Activated B cell treated with CpG ODN at 0.5 μM for 24 hours (primary cell): ENCODE measurements at regions of chr11 and their contacts with region 1.

Region 1: GRCh38 chr11:73072901-73073481 is 69.1 kb downstream of the FCHSD2 start:
- DNase-seq: no peak
- ATAC-seq: peak; percentile 70
- H3K4me3 Mint-ChIP-seq: peak overlapping the region; percentile 60
- H3K27ac Mint-ChIP-seq: peak overlapping the region; percentile 84
- H3K4me1 Mint-ChIP-seq: peaks cover 75% of the 10 kb centered on the region
- H3K27me3 Mint-ChIP-seq: no peaks in the 10 kb centered on the region
- CTCF ChIP-seq: no peak

Region 2: DNA sequence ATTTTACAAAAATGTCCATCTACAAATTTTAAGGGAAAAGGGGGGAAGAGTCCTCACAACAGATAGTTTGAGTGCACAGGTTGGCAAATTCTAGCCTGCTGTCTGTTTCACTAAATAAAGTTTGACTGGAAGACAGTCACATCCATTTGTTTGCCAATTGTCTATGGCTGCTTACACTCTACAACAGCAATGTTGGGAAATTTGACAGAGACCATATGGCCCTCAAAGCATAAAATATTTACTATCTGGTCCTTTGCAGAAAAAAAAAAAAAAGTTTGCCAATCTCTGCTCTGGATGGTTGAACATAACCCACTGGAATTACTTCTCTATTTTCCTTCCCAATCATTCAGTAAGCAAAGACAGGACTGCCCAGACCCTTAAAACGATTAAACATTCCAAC is 19.0 kb before region 1 on chr11:
- CTCF ChIA-PET with region 1: no interaction called
- POLR2A ChIA-PET with region 1: no interaction called
- intact Hi-C with region 1: loop called (anchors 2 kb)
- DNase-seq: no peak
- ATAC-seq: no peak
- H3K4me3 Mint-ChIP-seq: no peak overlapping the region
- H3K27ac Mint-ChIP-seq: peak overlapping the region; percentile 69
- H3K4me1 Mint-ChIP-seq: peaks cover 80% of the 10 kb centered on the region
- H3K27me3 Mint-ChIP-seq: no peaks in the 10 kb centered on the region
- CTCF ChIP-seq: no peak